ENCODE measurements at regions of chr7 and their contacts with region 1.

Region 1: DNA sequence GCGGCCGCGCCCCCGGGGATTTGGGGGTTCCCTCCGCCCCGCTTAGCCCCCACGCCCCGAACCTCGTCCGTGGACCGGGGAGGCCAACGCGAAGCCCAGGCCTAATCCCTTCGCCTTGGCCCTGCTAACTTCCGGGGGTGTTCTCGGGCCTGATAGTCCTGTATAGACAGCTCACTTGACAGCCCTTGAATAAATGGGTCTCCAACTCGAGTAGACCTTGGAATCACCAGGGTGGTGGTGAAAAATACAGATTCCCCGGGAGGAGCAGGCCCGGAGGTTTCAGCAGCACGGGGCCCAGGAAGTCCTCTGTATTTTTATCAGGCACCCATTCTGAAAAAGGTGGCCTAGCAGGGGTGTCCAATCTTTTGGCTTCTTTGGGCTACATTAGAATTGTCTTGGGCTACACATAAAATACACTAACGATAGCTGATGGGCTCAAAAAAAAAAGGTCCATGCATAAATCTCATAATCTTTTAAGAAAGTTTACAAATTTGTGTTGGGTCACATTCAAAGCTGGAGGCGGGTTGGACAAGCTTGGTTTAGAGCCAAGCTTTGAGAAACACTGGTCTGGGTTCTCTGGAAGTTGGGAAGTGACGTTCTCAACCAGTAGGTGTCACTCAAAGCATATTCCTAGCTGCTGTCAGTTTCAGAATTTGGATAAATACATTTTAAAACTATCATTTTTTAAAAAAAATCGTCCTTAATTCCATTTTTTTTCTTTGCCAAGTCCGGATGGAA is 221.7 kb downstream of the PHTF2 start:
- DNase-seq: peak; percentile 83
- H3K4me3 ChIP-seq: peak overlapping the region; percentile 0 to 74; a peak in 3 of 4 replicates
- H3K27ac ChIP-seq: peak overlapping the region; percentile 71 to 98
- H3K4me1 ChIP-seq: peaks cover 8 to 43% of the 10 kb centered on the region in 2 experiments; a peak in 3 of 4 replicates
- H3K27me3 ChIP-seq: no peaks in the 10 kb centered on the region
- CTCF ChIP-seq: peak; percentile 97
- EP300 ChIP-seq: no peak; a peak in 1 of 4 replicates
- RAD21 ChIP-seq: peak; percentile 93

Region 2: DNA sequence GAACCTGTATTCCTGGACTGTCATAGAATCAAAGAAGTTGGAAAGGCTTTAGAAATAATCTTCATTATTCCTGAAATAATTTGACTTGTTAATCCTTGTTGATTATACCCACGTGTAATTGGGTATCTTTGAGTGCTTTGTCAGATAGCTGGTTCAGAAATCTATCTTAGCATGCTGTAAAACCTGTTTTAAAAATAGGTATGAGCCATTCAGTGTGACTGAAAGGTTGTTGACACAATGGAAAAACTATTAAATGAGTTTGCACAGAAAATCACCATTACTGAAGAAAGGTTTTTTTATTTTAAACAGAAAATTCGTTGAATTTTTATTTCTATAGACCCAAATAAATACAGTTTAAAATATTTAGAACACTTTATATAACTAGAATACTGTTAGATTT is 183.0 kb before region 1 on chr7:
- CTCF ChIA-PET with region 1: no interaction called
- POLR2A ChIA-PET with region 1: no interaction called
- DNase-seq: no peak
- H3K4me3 ChIP-seq: no peak overlapping the region
- H3K27ac ChIP-seq: no peak overlapping the region
- H3K4me1 ChIP-seq: peaks cover 0 to 6% of the 10 kb centered on the region in 2 experiments; a peak in 3 of 4 replicates
- H3K27me3 ChIP-seq: no peaks in the 10 kb centered on the region
- CTCF ChIP-seq: no peak
- EP300 ChIP-seq: no peak
- RAD21 ChIP-seq: no peak

Region 3: DNA sequence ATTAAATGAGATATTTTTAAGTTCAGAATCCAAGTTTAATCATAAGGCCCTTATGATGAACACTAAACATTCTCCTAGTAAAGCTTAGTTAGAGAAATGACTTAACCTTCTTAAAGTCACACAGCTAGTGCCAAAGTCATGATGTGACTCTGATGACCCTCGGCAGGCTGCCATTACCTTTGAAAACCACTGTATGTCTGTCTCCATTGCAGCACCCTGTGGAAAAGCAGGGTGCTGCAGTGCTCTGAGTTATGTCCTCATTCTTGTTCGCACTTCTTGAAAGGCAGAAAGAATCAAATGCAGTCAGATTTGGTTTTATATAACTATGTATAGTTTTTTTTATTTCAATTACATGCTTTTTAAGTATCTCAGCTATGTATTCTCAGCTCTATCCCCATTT is 116.7 kb before region 1 on chr7:
- CTCF ChIA-PET with region 1: no interaction called
- POLR2A ChIA-PET with region 1: no interaction called
- DNase-seq: peak; percentile 15
- H3K4me3 ChIP-seq: no peak overlapping the region
- H3K27ac ChIP-seq: peak overlapping the region; percentile 2 to 51; a peak in 2 of 4 replicates
- H3K4me1 ChIP-seq: no peaks in the 10 kb centered on the region; a peak in 2 of 4 replicates
- H3K27me3 ChIP-seq: no peaks in the 10 kb centered on the region
- CTCF ChIP-seq: peak; percentile 52
- EP300 ChIP-seq: no peak
- RAD21 ChIP-seq: peak; percentile 47

Region 4: DNA sequence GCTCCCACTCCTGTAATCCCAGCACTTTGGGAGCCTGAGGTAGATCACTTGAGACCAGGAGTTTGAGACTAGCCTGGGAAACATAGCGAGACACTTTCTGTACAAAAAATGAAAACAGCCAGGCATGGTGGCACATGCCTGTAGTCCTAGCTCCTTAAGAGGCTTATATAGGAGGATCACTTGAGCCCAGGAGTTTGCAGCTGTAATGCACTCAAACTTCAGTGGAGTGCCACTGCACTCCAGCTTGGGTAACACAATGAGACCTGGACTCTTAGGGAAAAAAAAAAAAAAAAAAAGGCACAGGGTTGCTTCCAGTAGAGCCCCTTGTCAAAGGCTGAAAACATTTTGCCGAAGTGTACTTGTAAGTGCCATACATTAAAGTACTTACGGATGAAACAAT is 26.5 kb before region 1 on chr7:
- CTCF ChIA-PET with region 1: interaction called, 12 read pairs
- POLR2A ChIA-PET with region 1: no interaction called
- DNase-seq: no peak
- H3K4me3 ChIP-seq: no peak overlapping the region
- H3K27ac ChIP-seq: no peak overlapping the region
- H3K4me1 ChIP-seq: no peaks in the 10 kb centered on the region
- H3K27me3 ChIP-seq: no peaks in the 10 kb centered on the region
- CTCF ChIP-seq: no peak
- EP300 ChIP-seq: no peak
- RAD21 ChIP-seq: no peak

Region 5: GRCh38 chr7:78033410-78033809 is 13.1 kb after region 1 on chr7:
- CTCF ChIA-PET with region 1: interaction called, 49 read pairs
- POLR2A ChIA-PET with region 1: interaction called, 3 read pairs
- DNase-seq: no peak
- H3K4me3 ChIP-seq: no peak overlapping the region
- H3K27ac ChIP-seq: no peak overlapping the region
- H3K4me1 ChIP-seq: no peaks in the 10 kb centered on the region
- H3K27me3 ChIP-seq: no peaks in the 10 kb centered on the region
- CTCF ChIP-seq: no peak
- EP300 ChIP-seq: no peak
- RAD21 ChIP-seq: no peak

Region 6: DNA sequence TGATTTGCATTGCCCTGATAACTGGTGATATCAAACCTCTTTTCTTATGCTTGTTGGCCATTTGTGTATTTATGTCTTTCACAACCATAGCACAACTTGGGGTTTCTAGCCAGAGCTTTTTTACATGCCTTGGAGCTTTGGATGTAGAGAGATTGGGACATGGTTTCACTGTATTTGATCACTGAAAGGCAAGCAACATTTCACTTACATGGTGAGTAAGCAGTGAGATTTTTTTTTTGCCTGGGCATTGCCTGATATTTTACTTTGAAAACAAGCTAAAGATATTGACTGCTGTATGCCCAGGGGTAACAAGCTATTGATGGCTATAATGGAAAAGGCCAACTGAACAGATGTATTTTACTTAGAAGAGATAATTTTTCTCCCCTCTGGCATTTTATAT is 37.3 kb after region 1 on chr7:
- CTCF ChIA-PET with region 1: interaction called, 12 read pairs
- POLR2A ChIA-PET with region 1: no interaction called
- DNase-seq: no peak
- H3K4me3 ChIP-seq: no peak overlapping the region
- H3K27ac ChIP-seq: no peak overlapping the region
- H3K4me1 ChIP-seq: no peaks in the 10 kb centered on the region
- H3K27me3 ChIP-seq: no peaks in the 10 kb centered on the region
- CTCF ChIP-seq: no peak
- EP300 ChIP-seq: no peak
- RAD21 ChIP-seq: no peak

Region 7: GRCh38 chr7:78172138-78172778 is 152.0 kb after region 1 on chr7:
- CTCF ChIA-PET with region 1: no interaction called
- POLR2A ChIA-PET with region 1: no interaction called
- DNase-seq: no peak
- H3K4me3 ChIP-seq: no peak overlapping the region
- H3K27ac ChIP-seq: no peak overlapping the region
- H3K4me1 ChIP-seq: no peaks in the 10 kb centered on the region
- H3K27me3 ChIP-seq: no peaks in the 10 kb centered on the region
- CTCF ChIP-seq: no peak
- EP300 ChIP-seq: no peak
- RAD21 ChIP-seq: no peak

Region 8: DNA sequence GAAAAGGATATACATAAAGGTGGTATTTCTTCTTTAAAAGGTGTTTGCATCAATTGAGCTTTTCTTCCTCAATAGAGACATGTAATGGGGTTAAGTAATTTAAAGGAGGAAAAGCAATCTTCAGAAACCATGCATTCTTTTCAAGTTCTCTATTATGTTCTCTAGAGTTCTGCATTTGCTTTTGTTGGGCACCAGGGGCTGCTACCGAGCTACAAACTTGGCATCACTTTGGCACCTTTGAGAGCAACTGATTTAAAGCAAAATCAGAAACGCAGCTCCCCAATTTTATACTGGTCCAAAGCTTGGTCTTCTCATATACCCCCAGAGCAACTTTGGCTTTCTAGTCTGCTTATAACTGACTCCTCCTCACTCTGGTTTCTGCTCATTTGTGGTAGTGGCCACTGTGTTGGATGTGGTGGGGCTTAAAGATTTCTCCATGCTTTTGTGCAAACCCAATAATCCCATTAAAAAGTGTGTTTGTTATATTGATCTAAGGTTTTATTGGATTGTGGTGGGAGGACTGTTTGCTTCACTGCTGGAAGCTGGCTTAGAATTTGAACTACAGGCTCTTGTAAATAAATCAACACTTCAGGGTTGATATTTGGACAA is 490.4 kb after region 1 on chr7:
- CTCF ChIA-PET with region 1: interaction called, 11 read pairs
- POLR2A ChIA-PET with region 1: no interaction called
- DNase-seq: peak; percentile 57
- H3K4me3 ChIP-seq: no peak overlapping the region
- H3K27ac ChIP-seq: no peak overlapping the region
- H3K4me1 ChIP-seq: no peaks in the 10 kb centered on the region; a peak in 1 of 4 replicates
- H3K27me3 ChIP-seq: no peaks in the 10 kb centered on the region
- CTCF ChIP-seq: peak; percentile 95
- EP300 ChIP-seq: no peak
- RAD21 ChIP-seq: peak; percentile 91

Measured in SK-N-SH (cell line).